ENCODE measurements at regions of chr16 and their contacts with region 1.

Region 1: DNA sequence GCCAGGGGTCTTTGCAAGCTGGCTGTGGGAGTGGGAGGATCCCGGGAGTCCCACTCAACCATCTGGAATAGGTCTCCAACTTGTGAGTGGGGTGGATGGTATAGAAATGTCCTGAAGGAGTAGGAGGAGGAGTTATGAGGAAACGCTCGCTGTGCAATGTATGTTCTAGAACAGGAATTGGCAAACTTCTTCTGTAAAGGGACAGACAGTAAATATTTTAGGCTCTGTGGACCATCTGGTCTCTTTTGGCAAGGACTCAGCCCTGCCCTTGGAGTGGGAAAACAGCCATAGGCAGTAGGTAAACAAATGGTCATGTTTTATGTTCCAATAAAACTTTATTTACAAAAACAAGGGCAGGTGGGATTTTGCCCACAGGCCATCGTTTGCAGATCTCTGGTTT is 149.2 kb downstream of the NPIPB5 start:
- DNase-seq: no peak
- H3K4me3 ChIP-seq: no peak overlapping the region
- CTCF ChIP-seq: no peak

Region 2: DNA sequence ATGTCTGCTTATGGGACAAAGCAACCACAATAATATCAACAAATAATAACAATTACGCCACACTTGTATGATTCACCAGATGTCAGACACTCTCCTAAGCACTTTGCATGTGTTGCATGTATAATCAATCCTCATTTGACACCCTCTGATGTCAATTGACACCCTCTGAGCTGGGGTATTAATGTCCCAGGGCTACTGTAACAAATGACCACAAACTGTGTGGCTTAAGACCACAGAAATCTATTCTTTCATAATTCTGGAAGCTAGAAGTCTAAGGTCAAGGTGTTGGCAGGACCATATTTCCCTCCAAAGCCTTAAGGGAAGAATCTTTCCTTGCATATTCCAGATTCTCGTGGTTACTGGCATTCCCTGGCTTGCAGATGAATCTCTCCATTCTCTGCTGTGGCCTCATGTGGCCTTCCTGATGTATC is 36.6 kb before region 1 on chr16:
- in situ Hi-C with region 1: no loop called
- DNase-seq: no peak
- H3K4me3 ChIP-seq: no peak overlapping the region
- CTCF ChIP-seq: no peak

Region 3: DNA sequence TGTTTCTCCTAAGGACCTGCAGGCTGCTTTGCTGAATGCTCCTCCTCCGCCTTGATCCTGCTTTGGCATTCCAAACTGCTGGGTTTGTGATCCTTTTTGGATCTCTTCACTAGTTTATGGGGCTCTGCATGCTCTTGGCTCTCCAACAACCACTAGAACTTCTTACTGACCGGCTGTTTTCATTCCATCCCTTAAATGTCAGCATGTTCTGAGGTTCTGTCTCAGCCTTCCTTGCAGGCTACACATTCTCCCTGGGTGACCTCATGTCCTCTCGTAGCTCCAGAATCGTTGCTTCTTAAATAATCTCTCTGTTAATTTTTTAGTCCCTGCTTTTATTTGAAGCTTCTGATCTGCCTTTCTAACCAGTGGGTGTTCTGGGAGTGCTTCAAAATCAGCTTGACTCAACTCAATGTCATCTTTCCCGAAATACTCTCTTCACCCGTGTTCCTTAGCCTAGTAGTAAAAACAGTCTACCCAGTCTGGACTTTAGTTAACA is 35.0 kb after region 1 on chr16:
- in situ Hi-C with region 1: loop called (anchors 5 kb)
- DNase-seq: peak; percentile 12
- H3K4me3 ChIP-seq: no peak overlapping the region
- CTCF ChIP-seq: no peak

Region 4: GRCh38 chr16:22739077-22739476 is 79.1 kb after region 1 on chr16:
- in situ Hi-C with region 1: no loop called
- DNase-seq: no peak
- H3K4me3 ChIP-seq: no peak overlapping the region
- CTCF ChIP-seq: no peak